Breast epithelium (tissue), 4 donors: ENCODE measurements at regions of chr4 and their contacts with region 1.

Region 1: GRCh38 chr4:156961196-156962057 is 10.2 kb downstream of the PDGFC start:
- DNase-seq: no peak
- H3K4me3 ChIP-seq: no peak overlapping the region
- H3K27ac ChIP-seq: no peak overlapping the region
- H3K4me1 ChIP-seq: no peaks in the 10 kb centered on the region
- H3K27me3 ChIP-seq: no peaks in the 10 kb centered on the region
- CTCF ChIP-seq: no peak
- POLR2A ChIP-seq: no peak

Region 2: DNA sequence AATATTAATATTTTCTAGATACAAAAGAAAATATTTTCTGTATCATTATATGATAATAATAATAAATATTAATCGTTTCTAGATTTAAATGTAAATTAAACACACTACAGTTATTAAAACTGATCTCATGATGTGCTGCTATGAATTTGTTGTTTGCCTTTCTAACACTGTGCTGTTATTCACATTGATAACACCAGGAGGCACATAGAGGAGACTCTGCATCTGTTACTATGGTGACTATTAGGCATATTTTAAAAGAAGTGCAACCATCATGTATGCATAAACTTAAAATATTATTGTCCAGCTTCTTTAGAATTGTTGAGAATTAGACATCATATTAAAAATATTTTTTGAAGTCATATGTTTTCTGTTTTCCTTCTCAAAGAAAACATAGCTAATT is 21.9 kb after region 1 on chr4:
- intact Hi-C with region 1: no loop called
- DNase-seq: no peak
- H3K4me3 ChIP-seq: no peak overlapping the region
- H3K27ac ChIP-seq: no peak overlapping the region
- H3K4me1 ChIP-seq: no peaks in the 10 kb centered on the region
- H3K27me3 ChIP-seq: no peaks in the 10 kb centered on the region
- CTCF ChIP-seq: peak in 2 of 3 donors; percentile 12 to 13
- POLR2A ChIP-seq: no peak

Region 3: DNA sequence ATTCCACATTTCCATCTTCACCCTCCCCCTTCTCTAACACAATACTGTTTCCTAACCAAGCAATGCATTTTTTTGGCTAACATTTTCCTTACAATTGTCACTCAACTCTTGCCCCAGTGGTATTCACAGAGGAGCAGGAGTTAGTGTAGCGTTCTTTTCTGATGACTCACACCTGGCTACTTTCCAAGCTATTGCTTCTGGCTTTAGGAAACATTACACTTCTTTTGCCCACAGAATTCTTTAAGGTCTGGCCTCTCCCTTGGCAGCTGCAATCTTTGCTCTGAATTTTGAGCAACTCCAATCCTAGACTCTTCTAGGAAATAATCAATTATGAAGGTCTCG is 37.7 kb after region 1 on chr4:
- intact Hi-C with region 1: loop called (anchors 2 kb)
- DNase-seq: peak in 1 of 2 donors; percentile 59
- H3K4me3 ChIP-seq: no peak overlapping the region
- H3K27ac ChIP-seq: peak overlapping the region; percentile 38 to 54
- H3K4me1 ChIP-seq: no peaks in the 10 kb centered on the region
- H3K27me3 ChIP-seq: no peaks in the 10 kb centered on the region
- CTCF ChIP-seq: no peak
- POLR2A ChIP-seq: no peak